ENCODE measurements at regions of chr6 and their contacts with region 1.

Region 1: DNA sequence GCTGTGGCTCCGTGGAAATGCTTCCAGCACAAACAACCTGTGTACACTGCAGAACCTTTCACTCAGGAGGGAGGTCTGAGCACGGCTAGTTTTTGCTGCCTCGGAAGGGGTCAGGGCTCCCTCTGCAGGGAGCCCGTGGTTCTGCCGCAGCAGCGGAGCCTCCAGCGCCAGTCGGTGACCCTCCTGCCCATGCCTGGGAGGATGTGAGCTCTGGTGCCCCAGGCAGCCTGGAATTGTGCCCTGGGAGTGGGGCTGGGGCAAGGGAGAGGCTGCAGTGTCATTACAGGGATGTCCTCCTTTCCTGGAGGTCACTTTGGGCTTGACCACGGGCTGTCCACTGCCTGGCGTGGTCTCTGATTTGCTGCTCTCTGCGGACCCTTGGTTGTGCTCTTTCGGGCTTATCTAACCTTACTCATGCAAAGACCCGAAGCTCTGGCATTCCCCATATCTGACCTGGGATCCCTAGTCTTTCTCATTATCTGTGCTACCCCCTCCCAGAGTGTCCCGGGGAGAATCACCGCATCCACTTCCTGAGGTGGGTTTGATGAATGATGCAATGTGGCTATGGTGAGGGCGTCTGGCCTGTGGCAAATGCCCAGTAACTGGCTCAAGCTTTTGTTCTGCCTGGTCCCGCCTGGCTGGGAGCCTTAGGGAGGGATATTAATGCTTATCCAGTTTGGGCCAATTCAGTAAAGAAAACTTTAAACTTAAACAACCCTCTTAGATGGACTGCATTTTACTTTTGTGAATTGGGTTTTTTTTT is 59.6 kb upstream of the TAGAP start:
- DNase-seq: peak; percentile 58
- H3K4me3 ChIP-seq: no peak overlapping the region
- H3K27ac ChIP-seq: no peak overlapping the region
- H3K4me1 ChIP-seq: peaks cover 3% of the 10 kb centered on the region
- H3K27me3 ChIP-seq: no peaks in the 10 kb centered on the region
- CTCF ChIP-seq: peak; percentile 83

Region 2: GRCh38 chr6:159042003-159042825 is 62.1 kb before region 1 on chr6:
- intact Hi-C with region 1: loop called (anchors 2 kb)
- DNase-seq: peak; percentile 80
- H3K4me3 ChIP-seq: peak overlapping the region; percentile 4
- H3K27ac ChIP-seq: peak overlapping the region; percentile 48
- H3K4me1 ChIP-seq: no peaks in the 10 kb centered on the region
- H3K27me3 ChIP-seq: no peaks in the 10 kb centered on the region
- CTCF ChIP-seq: peak; percentile 97

Region 3: GRCh38 chr6:159252955-159253508 is 148.7 kb after region 1 on chr6:
- intact Hi-C with region 1: no loop called
- DNase-seq: no peak
- H3K4me3 ChIP-seq: no peak overlapping the region
- H3K27ac ChIP-seq: no peak overlapping the region
- H3K4me1 ChIP-seq: no peaks in the 10 kb centered on the region
- H3K27me3 ChIP-seq: no peaks in the 10 kb centered on the region
- CTCF ChIP-seq: peak; percentile 35

Measured in colonic mucosa (tissue), 4 donors.